T-cell (primary cell): ENCODE measurements at regions of chr12 and their contacts with region 1.

Region 1: DNA sequence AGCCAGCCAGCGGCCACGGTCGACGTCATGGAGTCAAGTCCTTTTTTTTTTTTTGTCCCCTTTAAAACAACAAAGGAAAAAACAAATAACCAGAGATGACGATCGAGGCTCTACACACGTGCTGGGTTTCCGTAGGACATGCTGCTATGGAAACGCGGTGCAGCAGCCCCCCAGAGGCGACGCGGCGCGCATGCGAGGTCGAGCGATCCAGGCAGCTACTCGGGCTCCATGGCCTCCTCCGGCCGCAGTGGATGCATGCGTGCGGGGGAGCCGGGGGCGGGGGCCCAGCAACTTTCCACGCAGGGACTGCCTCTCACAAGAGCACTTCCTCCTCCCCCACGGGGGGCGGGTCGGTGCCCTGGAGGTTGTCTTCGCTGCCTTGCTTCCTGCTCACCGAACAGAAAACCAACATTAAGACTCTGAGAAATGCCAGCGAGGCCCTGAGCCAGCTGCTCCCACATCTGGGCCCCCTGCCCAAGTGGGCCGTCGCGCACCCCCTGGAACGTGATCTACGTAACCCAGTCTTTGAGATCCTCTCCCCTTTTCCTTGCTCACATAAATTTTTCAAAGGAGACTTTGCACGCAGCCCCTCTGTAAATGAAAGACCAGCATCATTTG is 30.7 kb downstream of the P2RX4 start:
- DNase-seq: peak; percentile 80 to 100 (median 97)
- ATAC-seq: peak; percentile 92 to 95 (median 93)
- H3K4me3 ChIP-seq: peak overlapping the region; percentile 42 to 46
- H3K4me3 Mint-ChIP-seq: peak overlapping the region; percentile 76 to 89 (median 80)
- H3K27ac ChIP-seq: peak overlapping the region; percentile 95
- H3K27ac Mint-ChIP-seq: peak overlapping the region; percentile 97 to 100
- H3K4me1 ChIP-seq: peaks cover 26 to 45% of the 10 kb centered on the region in 2 experiments
- H3K4me1 Mint-ChIP-seq: peaks cover 37 to 49% (median 40%) of the 10 kb centered on the region in 3 donors
- H3K27me3 ChIP-seq: no peaks in the 10 kb centered on the region
- H3K27me3 Mint-ChIP-seq: no peaks in the 10 kb centered on the region

Region 2: GRCh38 chr12:121159467-121160307 is 80.9 kb before region 1 on chr12:
- CTCF ChIA-PET with region 1: no interaction called
- POLR2A ChIA-PET with region 1: no interaction called
- DNase-seq: no peak
- ATAC-seq: no peak
- H3K4me3 ChIP-seq: no peak overlapping the region
- H3K4me3 Mint-ChIP-seq: no peak overlapping the region
- H3K27ac ChIP-seq: no peak overlapping the region
- H3K27ac Mint-ChIP-seq: no peak overlapping the region
- H3K4me1 ChIP-seq: no peaks in the 10 kb centered on the region
- H3K4me1 Mint-ChIP-seq: no peaks in the 10 kb centered on the region
- H3K27me3 ChIP-seq: no peaks in the 10 kb centered on the region
- H3K27me3 Mint-ChIP-seq: no peaks in the 10 kb centered on the region

Region 3: DNA sequence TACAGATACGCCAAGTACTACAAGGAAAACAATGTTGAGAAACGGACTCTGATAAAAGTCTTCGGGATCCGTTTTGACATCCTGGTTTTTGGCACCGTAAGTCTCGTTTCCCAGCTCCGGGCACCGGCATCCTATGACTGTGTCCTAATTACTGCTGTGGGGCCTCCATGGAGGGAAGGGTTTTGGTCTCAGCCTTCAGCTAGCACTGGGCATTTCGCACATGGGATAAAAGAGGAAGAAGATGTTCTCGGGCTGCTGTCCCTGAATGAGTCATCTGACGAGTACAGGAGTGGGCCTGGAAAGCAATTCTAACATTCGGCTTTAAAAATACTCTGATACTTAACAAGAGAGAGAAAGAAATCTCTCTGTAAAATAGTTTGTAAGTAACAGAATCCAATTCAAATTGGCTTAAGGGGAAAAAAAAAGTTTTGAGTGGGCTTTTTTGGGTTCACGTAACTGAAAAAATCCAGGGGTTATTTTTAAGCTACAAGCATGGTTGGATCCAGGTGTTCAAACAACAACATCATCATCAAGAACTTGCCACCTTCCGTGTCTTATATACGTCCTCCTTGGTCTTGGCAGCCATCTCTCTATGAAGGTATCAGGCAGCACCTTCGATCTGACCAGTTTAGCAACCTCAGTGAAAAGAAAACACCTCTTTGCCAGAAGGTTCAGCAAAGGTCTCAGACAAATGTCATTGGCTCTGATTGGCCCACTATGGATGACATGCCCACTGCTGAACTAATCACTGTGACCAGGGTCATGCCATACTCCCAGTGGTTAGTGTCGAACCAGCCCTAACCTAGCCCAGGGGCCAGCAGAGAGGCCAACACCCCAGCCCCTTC is 65.0 kb before region 1 on chr12:
- CTCF ChIA-PET with region 1: no interaction called
- POLR2A ChIA-PET with region 1: interaction called in 1 of 2 experiments, 10 read pairs
- DNase-seq: peak in 1 of 35 experiments; percentile 1
- ATAC-seq: no peak
- H3K4me3 ChIP-seq: no peak overlapping the region
- H3K4me3 Mint-ChIP-seq: no peak overlapping the region
- H3K27ac ChIP-seq: no peak overlapping the region
- H3K27ac Mint-ChIP-seq: no peak overlapping the region
- H3K4me1 ChIP-seq: no peaks in the 10 kb centered on the region
- H3K4me1 Mint-ChIP-seq: no peaks in the 10 kb centered on the region
- H3K27me3 ChIP-seq: no peaks in the 10 kb centered on the region
- H3K27me3 Mint-ChIP-seq: no peaks in the 10 kb centered on the region

Region 4: GRCh38 chr12:121217063-121217462 is 23.5 kb before region 1 on chr12:
- CTCF ChIA-PET with region 1: no interaction called
- POLR2A ChIA-PET with region 1: no interaction called
- DNase-seq: no peak
- ATAC-seq: no peak
- H3K4me3 ChIP-seq: no peak overlapping the region
- H3K4me3 Mint-ChIP-seq: no peak overlapping the region
- H3K27ac ChIP-seq: no peak overlapping the region
- H3K27ac Mint-ChIP-seq: peak overlapping the region in 1 of 2 donors; percentile 48
- H3K4me1 ChIP-seq: peaks cover 0 to 17% of the 10 kb centered on the region in 2 experiments
- H3K4me1 Mint-ChIP-seq: peaks cover 32 to 35% (median 33%) of the 10 kb centered on the region in 3 donors
- H3K27me3 ChIP-seq: no peaks in the 10 kb centered on the region
- H3K27me3 Mint-ChIP-seq: no peaks in the 10 kb centered on the region

Region 5: GRCh38 chr12:121376754-121377697 is 136.4 kb after region 1 on chr12:
- CTCF ChIA-PET with region 1: no interaction called
- POLR2A ChIA-PET with region 1: no interaction called
- DNase-seq: no peak
- ATAC-seq: no peak
- H3K4me3 ChIP-seq: no peak overlapping the region
- H3K4me3 Mint-ChIP-seq: no peak overlapping the region
- H3K27ac ChIP-seq: no peak overlapping the region
- H3K27ac Mint-ChIP-seq: no peak overlapping the region
- H3K4me1 ChIP-seq: no peaks in the 10 kb centered on the region
- H3K4me1 Mint-ChIP-seq: no peaks in the 10 kb centered on the region
- H3K27me3 ChIP-seq: peaks cover 0 to 5% of the 10 kb centered on the region in 2 experiments
- H3K27me3 Mint-ChIP-seq: peaks cover 0 to 3% of the 10 kb centered on the region in 2 donors

Region 6: DNA sequence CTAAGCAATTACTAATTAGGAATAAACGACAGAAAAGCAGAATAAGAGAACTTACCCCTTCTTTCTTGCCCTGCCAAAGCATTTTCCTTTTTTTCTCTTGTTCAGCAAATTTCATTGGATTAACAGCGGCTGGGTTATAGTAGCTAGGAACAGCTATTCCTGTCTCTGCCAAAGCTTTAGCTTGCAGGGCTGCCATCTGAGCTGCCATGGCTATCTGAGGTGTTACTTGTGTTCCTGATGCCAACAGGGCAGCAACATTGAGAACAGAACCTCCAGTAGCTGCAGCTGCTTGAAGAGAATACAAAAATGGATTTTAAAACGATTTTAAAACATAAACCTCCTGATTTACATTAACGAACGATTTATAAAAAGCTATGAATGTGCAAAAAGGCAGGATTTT is 1267.6 kb after region 1 on chr12:
- CTCF ChIA-PET with region 1: no interaction called
- POLR2A ChIA-PET with region 1: interaction called in 1 of 2 experiments, 10 read pairs
- DNase-seq: no peak
- ATAC-seq: no peak
- H3K4me3 ChIP-seq: no peak overlapping the region
- H3K4me3 Mint-ChIP-seq: no peak overlapping the region
- H3K27ac ChIP-seq: no peak overlapping the region
- H3K27ac Mint-ChIP-seq: no peak overlapping the region
- H3K4me1 ChIP-seq: no peaks in the 10 kb centered on the region
- H3K4me1 Mint-ChIP-seq: peaks cover 0 to 3% (median 0%) of the 10 kb centered on the region in 3 donors
- H3K27me3 ChIP-seq: no peaks in the 10 kb centered on the region
- H3K27me3 Mint-ChIP-seq: no peaks in the 10 kb centered on the region